PC-9 (cell line): ENCODE measurements at regions of chr19 and their contacts with region 1.

Region 1: DNA sequence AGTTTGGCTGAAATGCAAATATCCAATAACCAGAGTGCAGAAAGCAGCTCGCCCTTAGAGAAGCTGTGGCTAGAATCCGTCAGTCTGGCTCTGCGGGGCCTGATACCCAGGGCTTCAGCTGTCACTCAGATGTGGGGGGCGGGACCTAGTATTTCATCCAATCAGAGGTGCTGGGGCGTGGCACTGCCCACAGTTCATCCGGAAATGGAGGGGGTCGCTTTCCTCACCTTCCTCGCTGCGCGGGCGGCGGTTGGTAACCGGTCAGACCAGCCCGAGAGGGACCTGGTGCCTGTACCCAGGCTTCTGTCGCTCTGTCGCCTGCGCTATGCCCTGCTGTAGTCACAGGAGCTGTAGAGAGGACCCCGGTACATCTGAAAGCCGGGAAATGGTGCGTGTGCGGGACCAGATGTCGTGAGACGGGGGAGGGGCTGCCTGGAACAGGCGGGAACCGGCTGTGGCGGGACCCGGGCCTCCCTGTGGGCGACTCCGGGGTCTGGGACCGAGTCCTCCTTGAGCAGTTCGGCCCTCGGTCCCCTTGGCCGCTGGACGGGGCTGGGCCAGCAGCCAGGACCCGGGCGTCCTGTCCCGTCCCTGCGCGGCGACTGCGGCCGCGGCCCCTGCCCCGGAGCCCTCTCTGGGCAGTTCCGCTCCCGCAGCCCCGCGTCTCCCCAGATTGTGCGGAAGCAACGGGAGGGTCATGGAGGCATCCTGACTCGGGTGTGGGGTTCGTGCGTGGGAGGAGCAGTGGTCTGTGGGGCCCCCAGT is at the start of gene ZNF700:
- DNase-seq: peak; percentile 93 to 94
- H3K4me3 ChIP-seq: peak within 1 kb of the TSS; percentile 91
- H3K27ac ChIP-seq: peak within 1 kb of the TSS; percentile 53
- H3K4me1 ChIP-seq: peaks cover 21% of the 10 kb centered on the region
- H3K27me3 ChIP-seq: no peaks in the 10 kb centered on the region
- CTCF ChIP-seq: no peak
- total RNA-seq, gene ZNF700: 7.6 and 7.8 TPM in 2 replicates

Region 2: DNA sequence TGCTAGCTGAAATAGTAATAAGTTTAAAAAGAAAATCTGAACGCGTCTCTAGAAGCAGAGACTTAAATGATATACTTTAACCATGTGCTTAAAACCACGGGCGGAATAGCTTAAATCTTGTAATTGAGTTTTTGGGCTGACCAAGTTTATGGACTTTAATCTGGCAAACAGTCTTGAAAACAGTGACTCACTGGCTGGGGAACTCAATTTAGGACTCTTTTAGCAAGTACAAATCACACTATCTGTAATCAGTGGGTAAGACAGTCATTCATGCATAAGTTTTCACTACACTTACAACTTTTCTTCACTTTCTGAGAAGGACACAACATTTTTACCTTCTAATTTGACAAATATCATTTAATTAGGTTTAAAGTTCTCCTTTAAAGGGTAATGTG is 301.0 kb before region 1 on chr19:
- CTCF ChIA-PET with region 1: no interaction called
- POLR2A ChIA-PET with region 1: interaction called, 14 read pairs
- intact Hi-C with region 1: no loop called
- DNase-seq: no peak
- H3K4me3 ChIP-seq: no peak overlapping the region
- H3K27ac ChIP-seq: no peak overlapping the region
- H3K4me1 ChIP-seq: no peaks in the 10 kb centered on the region
- H3K27me3 ChIP-seq: peaks cover under 1% of the 10 kb centered on the region; the same call in 1 of the 2 replicates
- CTCF ChIP-seq: no peak

Region 3: DNA sequence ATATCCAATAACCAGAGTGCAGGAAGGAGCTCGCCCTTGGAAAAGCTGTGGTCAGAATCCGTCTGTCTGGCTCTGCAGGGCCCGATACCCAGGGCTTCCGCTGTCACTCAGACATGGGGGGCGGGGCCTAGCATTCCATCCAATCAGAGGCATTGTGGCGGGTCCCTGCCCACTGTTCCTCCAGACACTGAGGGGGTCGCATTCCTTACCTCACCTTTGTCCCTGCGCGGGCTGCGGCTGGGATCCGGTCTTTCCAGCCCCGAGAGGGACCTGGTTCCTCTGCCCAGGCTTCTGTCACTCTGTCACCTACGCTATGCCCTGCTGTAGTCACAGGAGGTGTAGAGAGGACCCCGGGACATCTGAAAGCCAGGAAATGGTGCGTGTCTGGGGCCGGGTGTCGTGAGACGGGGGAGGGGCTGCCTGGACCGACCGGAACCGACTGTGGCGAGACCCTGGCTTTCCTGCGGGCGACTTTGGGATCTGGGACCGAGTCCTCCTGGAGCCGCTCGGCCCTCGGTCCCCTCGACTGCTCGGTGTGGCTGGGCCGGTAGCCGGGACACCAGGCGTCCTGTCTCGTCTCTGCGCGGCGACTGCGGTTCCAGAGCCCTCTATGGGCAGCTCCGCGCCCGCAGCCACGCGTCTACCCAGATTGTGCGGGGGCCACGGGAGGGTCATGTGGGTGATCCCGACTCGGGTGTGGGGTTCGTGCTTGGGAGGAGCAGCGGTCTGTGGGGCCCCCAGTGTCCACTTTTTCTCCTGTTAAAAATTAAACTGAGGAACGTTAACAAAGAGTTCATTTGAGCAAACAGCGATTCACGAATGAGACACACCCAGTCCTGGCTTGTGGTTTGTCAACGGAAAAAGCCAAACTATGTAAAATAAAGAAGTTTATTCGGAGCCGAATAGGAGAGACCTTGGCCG is 37.2 kb before region 1 on chr19 and contains the start of gene ZNF69:
- CTCF ChIA-PET with region 1: interaction called, 5 read pairs
- POLR2A ChIA-PET with region 1: no interaction called
- intact Hi-C with region 1: loop called (anchors 5 kb)
- DNase-seq: peak; percentile 69 to 90
- H3K4me3 ChIP-seq: peak within 1 kb of the TSS; percentile 56
- H3K27ac ChIP-seq: no peak within 1 kb of the TSS
- H3K4me1 ChIP-seq: peaks cover 8% of the 10 kb centered on the region; the same call in 1 of the 2 replicates
- H3K27me3 ChIP-seq: peaks cover 8% of the 10 kb centered on the region; the same call in 1 of the 2 replicates
- CTCF ChIP-seq: no peak; the same call in 1 of the 2 replicates
- total RNA-seq, gene ZNF69: 3.3 and 4.4 TPM in 2 replicates

Region 4: GRCh38 chr19:11987405-11988281 is 62.6 kb after region 1 on chr19:
- CTCF ChIA-PET with region 1: interaction called, 11 read pairs
- POLR2A ChIA-PET with region 1: no interaction called
- intact Hi-C with region 1: loop called (anchors 1 kb)
- DNase-seq: peak; percentile 82 to 92
- H3K4me3 ChIP-seq: peak overlapping the region; percentile 48
- H3K27ac ChIP-seq: no peak overlapping the region
- H3K4me1 ChIP-seq: peaks cover 7% of the 10 kb centered on the region; the same call in 1 of the 2 replicates
- H3K27me3 ChIP-seq: peaks cover 16% of the 10 kb centered on the region; the same call in 1 of the 2 replicates
- CTCF ChIP-seq: no peak

Region 5: DNA sequence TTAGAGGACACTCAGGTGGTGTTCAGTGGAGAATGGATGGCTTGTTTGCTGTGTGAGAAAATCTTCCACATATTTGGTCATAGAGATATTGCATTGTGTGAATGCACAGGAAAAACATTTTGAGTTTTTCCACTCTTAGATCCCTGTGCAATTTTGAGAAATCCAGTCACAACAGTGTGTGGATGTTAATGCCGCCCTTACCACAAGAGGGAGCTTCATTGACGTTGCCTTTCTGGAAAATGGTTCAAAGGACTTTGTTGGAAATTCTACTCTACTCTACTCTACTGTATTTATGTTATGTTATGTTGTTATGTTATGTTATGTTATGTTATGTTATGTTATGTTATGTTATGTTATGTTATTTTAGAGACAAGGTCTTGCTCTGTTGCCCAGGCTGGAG is 201.6 kb after region 1 on chr19:
- CTCF ChIA-PET with region 1: interaction called, 15 read pairs
- POLR2A ChIA-PET with region 1: no interaction called
- intact Hi-C with region 1: no loop called
- DNase-seq: no peak
- H3K4me3 ChIP-seq: no peak overlapping the region
- H3K27ac ChIP-seq: no peak overlapping the region
- H3K4me1 ChIP-seq: no peaks in the 10 kb centered on the region
- H3K27me3 ChIP-seq: 0 out of 2 replicates have a peak, but pooled peaks cover 4% of the 10 kb centered on the region
- CTCF ChIP-seq: peak; percentile 73

Region 6: GRCh38 chr19:12666265-12667048 is 741.4 kb after region 1 on chr19 and contains the starts of genes MAN2B1 and WDR83:
- CTCF ChIA-PET with region 1: no interaction called
- POLR2A ChIA-PET with region 1: no interaction called
- intact Hi-C with region 1: loop called (anchors 5 kb)
- DNase-seq: peak; percentile 65 to 72
- H3K4me3 ChIP-seq: peak within 1 kb of the TSS; percentile 98
- H3K27ac ChIP-seq: no peak within 1 kb of the TSS
- H3K4me1 ChIP-seq: peaks cover 29% of the 10 kb centered on the region
- H3K27me3 ChIP-seq: no peaks in the 10 kb centered on the region
- CTCF ChIP-seq: no peak
- total RNA-seq, gene MAN2B1: 41.5 and 48.2 TPM in 2 replicates
- total RNA-seq, gene WDR83: 12.9 and 21.2 TPM in 2 replicates